Motor neuron (in vitro differentiated cells): ENCODE measurements at regions of chr2 and their contacts with region 1.

Region 1: GRCh38 chr2:181457121-181457740 is at the start of gene ITGA4:
- ATAC-seq: peak; percentile 89 to 98 (median 97)
- H3K4me3 ChIP-seq: peak within 1 kb of the TSS; percentile 46 to 72 (median 56)
- H3K27ac ChIP-seq: no peak within 1 kb of the TSS
- H3K4me1 ChIP-seq: no peaks in the 10 kb centered on the region
- total RNA-seq, gene ITGA4: 1.4 to 58.3 (median 8.4) TPM

Region 2: GRCh38 chr2:181104512-181105115 is 352.6 kb before region 1 on chr2:
- in situ Hi-C with region 1: loop called in 4 of 9 experiments (anchors 10 to 25 kb)
- ATAC-seq: peak in 6 of 8 experiments; percentile 31 to 73 (median 44)
- H3K4me3 ChIP-seq: no peak overlapping the region
- H3K27ac ChIP-seq: no peak overlapping the region
- H3K4me1 ChIP-seq: peaks cover 0 to 7% of the 10 kb centered on the region in 2 donors

Region 3: DNA sequence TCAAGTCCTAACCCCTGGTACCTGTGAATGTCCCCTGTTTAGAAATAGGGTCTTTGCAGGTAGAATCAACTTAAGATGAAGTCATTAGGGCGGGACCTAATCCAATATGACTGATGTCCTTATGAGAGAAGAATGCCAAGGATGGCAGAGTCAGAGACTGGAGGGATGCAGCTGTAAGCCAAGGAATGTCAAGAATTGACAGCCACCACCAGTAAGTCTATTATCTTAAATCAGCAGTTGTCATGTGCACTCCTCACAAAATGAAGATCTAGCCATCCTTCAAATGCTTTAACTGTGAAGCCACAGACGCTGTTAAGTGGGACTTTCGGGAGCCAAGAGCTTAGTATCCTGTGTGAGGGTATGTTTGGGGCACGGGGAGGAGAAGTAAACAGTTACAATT is 83.2 kb after region 1 on chr2:
- in situ Hi-C with region 1: no loop called
- ATAC-seq: no peak
- H3K4me3 ChIP-seq: no peak overlapping the region
- H3K27ac ChIP-seq: no peak overlapping the region
- H3K4me1 ChIP-seq: no peaks in the 10 kb centered on the region